Naive thymus-derived CD4-positive, alpha-beta T cell (primary cell): ENCODE measurements at regions of chr1 and their contacts with region 1.

Region 1: GRCh38 chr1:33036526-33037503 is at the start of gene AK2:
- DNase-seq: peak; percentile 63 to 91 (median 84)
- ATAC-seq: peak; percentile 100
- H3K4me3 ChIP-seq: peak within 1 kb of the TSS; percentile 70
- H3K4me3 Mint-ChIP-seq: peak within 1 kb of the TSS; percentile 92 to 99 (median 96)
- H3K27ac ChIP-seq: peak within 1 kb of the TSS; percentile 73
- H3K27ac Mint-ChIP-seq: peak within 1 kb of the TSS; percentile 74 to 96 (median 89)
- H3K4me1 ChIP-seq: peaks cover 11 to 24% of the 10 kb centered on the region in 2 donors
- H3K4me1 Mint-ChIP-seq: peaks cover 35 to 50% (median 46%) of the 10 kb centered on the region in 7 donors
- H3K27me3 ChIP-seq: no peaks in the 10 kb centered on the region
- H3K27me3 Mint-ChIP-seq: peaks cover 0 to 1% (median 0%) of the 10 kb centered on the region in 5 donors
- total RNA-seq, gene AK2: 53.8 to 219 (median 90.2) TPM

Region 2: DNA sequence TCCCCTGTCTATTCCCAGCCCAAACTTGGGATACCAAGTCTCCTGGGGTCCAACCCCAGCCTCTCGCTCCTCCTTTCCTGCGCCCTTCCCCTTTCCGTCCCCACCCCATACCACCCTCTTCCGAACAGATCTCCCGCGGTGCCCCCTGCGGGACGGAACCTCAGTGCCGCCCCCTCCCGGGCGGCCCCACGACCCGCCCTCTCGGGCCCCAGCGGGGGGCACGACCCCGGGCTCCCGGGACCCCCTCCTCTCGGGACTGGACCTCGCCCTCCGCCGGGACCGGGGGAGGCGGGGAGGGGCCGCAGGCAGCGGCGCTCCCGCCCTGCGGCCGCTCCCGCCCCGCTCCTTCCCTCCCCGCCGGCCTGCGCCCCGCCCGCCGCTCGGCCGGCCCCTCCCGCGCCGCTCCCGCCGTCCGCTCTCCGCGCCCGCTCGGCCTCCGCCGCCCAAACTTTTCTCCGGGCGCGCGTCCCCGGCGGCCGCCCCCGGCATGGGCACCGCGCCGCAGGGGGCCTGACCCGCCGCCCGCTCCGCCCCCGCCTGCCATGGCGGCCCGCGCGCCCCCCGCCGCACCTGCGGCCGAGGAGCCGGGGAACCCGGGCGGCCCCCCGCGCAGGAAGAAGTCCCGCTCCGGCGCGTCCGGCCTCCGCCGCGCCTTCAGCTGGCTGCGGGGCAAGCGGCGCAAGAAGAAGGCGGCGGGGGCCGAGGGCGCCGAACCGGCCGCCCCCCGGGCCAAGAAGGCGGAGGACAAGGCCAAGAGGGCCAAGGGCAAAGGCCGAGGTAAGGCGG is 295.2 kb before region 1 on chr1:
- CTCF ChIA-PET with region 1: no interaction called
- POLR2A ChIA-PET with region 1: no interaction called
- intact Hi-C with region 1: no loop called
- DNase-seq: peak in 1 of 9 donors; percentile 29
- ATAC-seq: peak; percentile 54
- H3K4me3 ChIP-seq: no peak overlapping the region
- H3K4me3 Mint-ChIP-seq: peak overlapping the region in 9 of 10 donors; percentile 50 to 80 (median 68)
- H3K27ac ChIP-seq: no peak overlapping the region
- H3K27ac Mint-ChIP-seq: no peak overlapping the region
- H3K4me1 ChIP-seq: no peaks in the 10 kb centered on the region
- H3K4me1 Mint-ChIP-seq: peaks cover 0 to 3% (median 0%) of the 10 kb centered on the region in 7 donors
- H3K27me3 ChIP-seq: peaks cover 0 to 17% of the 10 kb centered on the region in 2 donors
- H3K27me3 Mint-ChIP-seq: peaks cover 3 to 56% (median 18%) of the 10 kb centered on the region in 5 donors

Region 3: GRCh38 chr1:32981003-32981901 is 55.6 kb before region 1 on chr1:
- CTCF ChIA-PET with region 1: no interaction called
- POLR2A ChIA-PET with region 1: no interaction called
- intact Hi-C with region 1: loop called in 1 of 2 experiments (anchors 1 kb)
- DNase-seq: peak in 8 of 9 donors; percentile 51 to 73 (median 63)
- ATAC-seq: peak; percentile 95
- H3K4me3 ChIP-seq: peak overlapping the region; percentile 49
- H3K4me3 Mint-ChIP-seq: peak overlapping the region; percentile 65 to 93 (median 82)
- H3K27ac ChIP-seq: peak overlapping the region; percentile 84
- H3K27ac Mint-ChIP-seq: peak overlapping the region; percentile 91 to 99 (median 94)
- H3K4me1 ChIP-seq: peaks cover 11 to 26% of the 10 kb centered on the region in 2 donors
- H3K4me1 Mint-ChIP-seq: peaks cover 12 to 74% (median 26%) of the 10 kb centered on the region in 7 donors
- H3K27me3 ChIP-seq: no peaks in the 10 kb centered on the region
- H3K27me3 Mint-ChIP-seq: no peaks in the 10 kb centered on the region

Region 4: DNA sequence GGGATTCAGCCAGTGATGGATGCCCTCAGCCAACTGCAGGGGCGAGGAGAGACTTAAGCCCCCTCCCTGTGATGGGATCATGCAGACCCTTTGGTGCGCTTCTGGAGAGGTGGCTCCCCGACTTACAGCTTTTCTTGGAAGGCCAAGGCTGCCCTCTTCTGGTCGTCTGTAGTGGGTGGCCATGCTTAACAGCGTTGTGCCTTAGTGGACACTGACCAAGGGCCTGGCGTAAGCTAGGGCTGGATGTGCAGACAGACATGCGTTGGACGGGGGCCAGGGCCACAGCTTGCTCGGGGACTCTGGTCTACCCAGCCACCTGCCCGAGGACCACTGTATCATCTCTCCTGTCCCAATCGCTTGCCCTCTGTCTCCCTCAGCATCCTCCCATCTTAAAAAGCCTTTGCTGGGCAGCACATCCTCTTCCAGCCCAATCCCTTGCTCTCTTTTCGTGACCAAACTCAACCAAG is 49.6 kb after region 1 on chr1:
- CTCF ChIA-PET with region 1: no interaction called
- POLR2A ChIA-PET with region 1: no interaction called
- intact Hi-C with region 1: loop called (anchors 1 kb)
- DNase-seq: peak in 2 of 9 donors; percentile 29 to 50
- ATAC-seq: peak; percentile 63
- H3K4me3 ChIP-seq: no peak overlapping the region
- H3K4me3 Mint-ChIP-seq: no peak overlapping the region
- H3K27ac ChIP-seq: no peak overlapping the region
- H3K27ac Mint-ChIP-seq: peak overlapping the region in 3 of 9 donors; percentile 18 to 48 (median 44)
- H3K4me1 ChIP-seq: peaks cover 10 to 19% of the 10 kb centered on the region in 2 donors
- H3K4me1 Mint-ChIP-seq: peaks cover 24 to 61% (median 47%) of the 10 kb centered on the region in 7 donors
- H3K27me3 ChIP-seq: no peaks in the 10 kb centered on the region
- H3K27me3 Mint-ChIP-seq: peaks cover 0 to 28% (median 0%) of the 10 kb centered on the region in 5 donors

Region 5: DNA sequence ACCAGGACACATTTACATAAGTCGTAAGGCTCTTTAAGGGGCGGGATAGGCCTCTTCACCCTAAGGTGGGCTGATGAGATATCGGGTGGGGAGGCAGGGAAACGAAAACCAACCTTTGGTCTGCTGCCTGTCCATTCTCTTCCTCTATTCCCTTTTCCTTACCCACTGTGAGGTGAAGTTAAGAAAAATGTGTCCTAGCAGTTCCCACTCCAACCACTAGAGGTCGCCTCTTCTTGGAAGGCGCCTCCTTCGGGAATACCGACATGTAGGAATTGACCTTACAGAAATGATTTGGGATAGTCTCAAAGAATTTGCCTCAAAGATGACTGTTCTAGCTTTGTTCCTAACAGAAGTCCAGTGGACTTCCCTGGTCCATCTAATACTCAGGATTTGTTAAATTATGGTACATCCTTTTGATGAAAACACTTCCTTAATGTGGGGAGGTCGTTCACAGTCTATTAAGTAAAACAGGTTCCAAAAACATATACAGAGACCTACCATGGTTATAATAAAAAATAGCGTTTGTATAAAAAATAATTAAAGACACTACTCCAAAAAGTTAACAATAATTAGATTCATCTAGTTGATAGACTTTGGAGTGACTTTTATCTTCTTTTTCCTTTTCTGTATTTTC is 58.3 kb after region 1 on chr1:
- CTCF ChIA-PET with region 1: no interaction called
- POLR2A ChIA-PET with region 1: interaction called, 3 read pairs
- intact Hi-C with region 1: loop called in 1 of 2 experiments (anchors 5 kb)
- DNase-seq: no peak
- ATAC-seq: no peak
- H3K4me3 ChIP-seq: no peak overlapping the region
- H3K4me3 Mint-ChIP-seq: no peak overlapping the region
- H3K27ac ChIP-seq: no peak overlapping the region
- H3K27ac Mint-ChIP-seq: peak overlapping the region in 1 of 9 donors; percentile 24
- H3K4me1 ChIP-seq: peaks cover 28 to 29% of the 10 kb centered on the region in 2 donors
- H3K4me1 Mint-ChIP-seq: peaks cover 27 to 70% (median 46%) of the 10 kb centered on the region in 7 donors
- H3K27me3 ChIP-seq: no peaks in the 10 kb centered on the region
- H3K27me3 Mint-ChIP-seq: no peaks in the 10 kb centered on the region